ENCODE measurements at regions of chr19 and their contacts with region 1.

Region 1: GRCh38 chr19:6238643-6239281 is 41.0 kb downstream of the MLLT1 start:
- DNase-seq: peak; percentile 78 to 83
- ATAC-seq: peak; percentile 59
- H3K4me3 ChIP-seq: no peak overlapping the region
- H3K27ac ChIP-seq: peak overlapping the region; percentile 6 to 78
- H3K4me1 ChIP-seq: peaks cover 2 to 3% of the 10 kb centered on the region in 2 donors
- H3K27me3 ChIP-seq: no peaks in the 10 kb centered on the region

Region 2: DNA sequence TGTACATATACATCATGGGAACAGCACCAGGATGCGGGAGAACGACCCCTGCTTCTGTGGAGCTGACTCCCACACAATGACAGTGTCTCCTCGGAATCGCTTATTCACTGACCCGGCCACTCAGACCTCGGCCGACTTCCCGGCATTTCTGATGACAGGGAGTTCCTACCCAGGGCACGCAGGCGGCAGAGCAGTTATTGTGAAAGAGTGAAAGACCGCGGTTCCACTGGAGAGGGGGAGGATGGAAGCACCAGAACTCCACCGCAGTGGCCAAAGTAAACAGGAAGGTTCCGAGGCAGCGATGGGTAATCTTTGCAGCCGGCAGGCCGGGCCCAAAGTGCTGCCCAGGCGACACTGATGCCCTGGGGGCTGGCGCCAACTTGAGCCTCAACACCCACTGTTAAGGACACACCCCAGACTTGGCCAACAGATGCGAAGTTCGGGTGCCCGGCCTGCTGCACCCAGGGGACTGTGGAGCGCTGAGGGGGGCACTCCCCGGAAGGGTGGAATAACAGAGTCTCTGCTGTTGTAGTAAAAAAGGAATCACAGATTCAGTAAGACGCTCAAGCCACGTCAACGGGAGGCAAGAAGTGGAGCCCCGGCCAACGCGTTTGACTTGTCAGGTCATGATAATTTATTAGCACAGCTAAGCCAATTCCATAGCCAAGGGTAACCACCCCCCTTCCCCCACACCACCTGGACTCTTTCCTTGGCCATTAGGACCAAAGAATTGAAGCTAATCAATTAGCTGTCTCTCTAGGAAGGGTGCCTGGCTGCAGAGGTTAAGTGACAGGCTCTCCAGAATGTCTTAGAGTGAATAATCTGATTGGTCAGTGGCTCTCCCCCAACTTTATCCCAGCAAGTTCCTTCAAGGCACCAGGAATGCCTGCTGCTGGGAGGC is 35.2 kb after region 1 on chr19:
- intact Hi-C with region 1: loop called (anchors 5 kb)
- DNase-seq: peak; percentile 94 to 95
- ATAC-seq: peak; percentile 90
- H3K4me3 ChIP-seq: no peak overlapping the region
- H3K27ac ChIP-seq: peak overlapping the region; percentile 52 to 72
- H3K4me1 ChIP-seq: no peaks in the 10 kb centered on the region
- H3K27me3 ChIP-seq: no peaks in the 10 kb centered on the region

Measured in aorta (tissue), 5 donors.